Naive thymus-derived CD4-positive, alpha-beta T cell (primary cell): ENCODE measurements at regions of chr9 and their contacts with region 1.

Region 1: GRCh38 chr9:5832543-5833529 is at the start of gene ERMP1:
- DNase-seq: peak; percentile 83 to 94 (median 91)
- ATAC-seq: peak; percentile 95
- H3K4me3 ChIP-seq: peak within 1 kb of the TSS; percentile 85
- H3K4me3 Mint-ChIP-seq: peak within 1 kb of the TSS; percentile 91 to 99 (median 95)
- H3K27ac ChIP-seq: peak within 1 kb of the TSS; percentile 60
- H3K27ac Mint-ChIP-seq: peak within 1 kb of the TSS; percentile 79 to 96 (median 89)
- H3K4me1 ChIP-seq: peaks cover 25 to 33% of the 10 kb centered on the region in 2 donors
- H3K4me1 Mint-ChIP-seq: peaks cover 28 to 71% (median 60%) of the 10 kb centered on the region in 7 donors
- H3K27me3 ChIP-seq: no peaks in the 10 kb centered on the region
- H3K27me3 Mint-ChIP-seq: no peaks in the 10 kb centered on the region
- total RNA-seq, gene ERMP1: 9.5 to 37.1 (median 20.0) TPM

Region 2: GRCh38 chr9:4740638-4741364 is 1092.0 kb before region 1 on chr9 and contains the start of gene AK3:
- CTCF ChIA-PET with region 1: no interaction called
- POLR2A ChIA-PET with region 1: no interaction called
- intact Hi-C with region 1: loop called in 1 of 2 experiments (anchors 10 kb)
- DNase-seq: peak; percentile 72 to 85 (median 83)
- ATAC-seq: peak; percentile 95
- H3K4me3 ChIP-seq: peak within 1 kb of the TSS; percentile 73
- H3K4me3 Mint-ChIP-seq: peak within 1 kb of the TSS; percentile 88 to 99 (median 94)
- H3K27ac ChIP-seq: peak within 1 kb of the TSS; percentile 86
- H3K27ac Mint-ChIP-seq: peak within 1 kb of the TSS; percentile 86 to 98 (median 93)
- H3K4me1 ChIP-seq: peaks cover 10 to 16% of the 10 kb centered on the region in 2 donors
- H3K4me1 Mint-ChIP-seq: peaks cover 22 to 49% (median 40%) of the 10 kb centered on the region in 7 donors
- H3K27me3 ChIP-seq: no peaks in the 10 kb centered on the region
- H3K27me3 Mint-ChIP-seq: no peaks in the 10 kb centered on the region
- total RNA-seq, gene AK3: 18.0 to 34.8 (median 25.8) TPM

Region 3: DNA sequence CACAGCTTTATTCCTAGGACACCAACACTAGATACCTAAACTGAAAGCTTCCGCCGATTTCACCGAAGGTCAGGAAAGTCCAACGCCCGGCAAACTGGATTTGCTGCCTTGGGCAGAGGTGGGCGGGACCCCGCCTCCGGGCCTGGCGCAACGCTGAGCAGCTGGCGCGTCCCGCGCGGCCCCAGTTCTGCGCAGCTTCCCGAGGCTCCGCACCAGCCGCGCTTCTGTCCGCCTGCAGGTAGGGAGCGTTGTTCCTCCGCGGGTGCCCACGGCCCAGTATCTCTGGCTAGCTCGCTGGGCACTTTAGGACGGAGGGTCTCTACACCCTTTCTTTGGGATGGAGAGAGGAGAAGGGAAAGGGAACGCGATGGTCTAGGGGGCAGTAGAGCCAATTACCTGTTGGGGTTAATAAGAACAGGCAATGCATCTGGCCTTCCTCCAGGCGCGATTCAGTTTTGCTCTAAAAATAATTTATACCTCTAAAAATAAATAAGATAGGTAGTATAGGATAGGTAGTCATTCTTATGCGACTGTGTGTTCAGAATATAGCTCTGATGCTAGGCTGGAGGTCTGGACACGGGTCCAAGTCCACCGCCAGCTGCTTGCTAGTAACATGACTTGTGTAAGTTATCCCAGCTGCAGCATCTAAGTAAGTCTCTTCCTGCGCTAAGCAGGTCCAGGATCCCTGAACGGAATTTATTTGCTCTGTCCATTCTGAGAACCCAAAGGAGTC is 382.3 kb before region 1 on chr9 and contains the start of gene CD274:
- CTCF ChIA-PET with region 1: no interaction called
- POLR2A ChIA-PET with region 1: no interaction called
- intact Hi-C with region 1: loop called in 1 of 2 experiments (anchors 5 kb)
- DNase-seq: peak; percentile 61 to 89 (median 80)
- ATAC-seq: peak; percentile 95
- H3K4me3 ChIP-seq: peak within 1 kb of the TSS; percentile 78
- H3K4me3 Mint-ChIP-seq: peak within 1 kb of the TSS; percentile 92 to 98 (median 95)
- H3K27ac ChIP-seq: peak within 1 kb of the TSS; percentile 94
- H3K27ac Mint-ChIP-seq: peak within 1 kb of the TSS; percentile 97 to 99 (median 98)
- H3K4me1 ChIP-seq: peaks cover 0 to 11% of the 10 kb centered on the region in 2 donors
- H3K4me1 Mint-ChIP-seq: peaks cover 33 to 69% (median 62%) of the 10 kb centered on the region in 7 donors
- H3K27me3 ChIP-seq: no peaks in the 10 kb centered on the region
- H3K27me3 Mint-ChIP-seq: no peaks in the 10 kb centered on the region
- total RNA-seq, gene CD274: 2.9 to 38.7 (median 7.8) TPM

Region 4: GRCh38 chr9:5843794-5844504 is 11.1 kb after region 1 on chr9:
- CTCF ChIA-PET with region 1: interaction called, 45 read pairs
- POLR2A ChIA-PET with region 1: interaction called, 38 read pairs
- intact Hi-C with region 1: loop called (anchors 1 kb)
- DNase-seq: peak in 2 of 9 donors; percentile 7 to 22
- ATAC-seq: peak; percentile 20
- H3K4me3 ChIP-seq: peak overlapping the region; percentile 5
- H3K4me3 Mint-ChIP-seq: peak overlapping the region; percentile 75 to 85 (median 80)
- H3K27ac ChIP-seq: peak overlapping the region; percentile 24
- H3K27ac Mint-ChIP-seq: peak overlapping the region; percentile 58 to 93 (median 91)
- H3K4me1 ChIP-seq: peaks cover 45 to 47% of the 10 kb centered on the region in 2 donors
- H3K4me1 Mint-ChIP-seq: peaks cover 50 to 83% (median 64%) of the 10 kb centered on the region in 7 donors
- H3K27me3 ChIP-seq: no peaks in the 10 kb centered on the region
- H3K27me3 Mint-ChIP-seq: no peaks in the 10 kb centered on the region

Region 5: DNA sequence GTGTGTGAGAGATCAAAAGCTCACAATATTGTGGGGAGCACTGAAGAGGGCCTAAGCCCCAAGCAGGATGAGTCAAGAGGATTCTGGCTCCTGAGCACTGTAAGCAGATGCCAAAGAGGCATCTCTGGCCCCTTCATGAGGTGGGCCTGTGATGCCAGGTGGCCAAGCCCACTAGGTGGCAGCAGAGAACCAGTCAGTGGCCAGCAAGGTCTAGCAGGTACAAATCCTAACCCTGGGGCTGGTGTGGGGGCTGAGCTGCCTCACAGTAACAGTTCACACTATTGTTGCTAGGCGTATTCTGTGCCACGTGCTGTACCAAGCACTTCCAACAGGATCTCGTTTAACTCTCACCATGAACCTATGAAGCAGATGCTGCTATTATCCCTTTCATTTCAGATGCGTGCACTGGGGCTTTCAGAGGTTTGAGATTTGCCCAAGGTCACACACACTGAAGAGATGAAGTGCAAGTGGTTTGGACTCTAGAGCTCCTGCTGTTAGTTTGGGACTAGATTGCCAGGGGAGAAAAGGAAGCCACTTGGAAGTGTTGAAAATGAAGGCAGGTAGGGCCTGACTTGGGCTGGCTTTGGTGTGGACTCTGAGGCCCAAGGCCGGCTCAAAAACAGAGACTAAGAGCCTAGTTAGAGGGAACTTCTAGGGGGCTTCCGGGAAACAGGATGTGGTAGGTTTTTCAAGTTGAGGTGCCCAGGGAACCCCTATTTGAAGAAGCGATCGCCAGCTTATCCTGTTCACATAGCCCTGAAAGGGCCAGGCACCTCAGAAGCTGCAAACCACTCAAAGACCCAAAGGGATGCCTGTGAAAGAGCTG is 53.5 kb after region 1 on chr9:
- CTCF ChIA-PET with region 1: interaction called, 5 read pairs
- POLR2A ChIA-PET with region 1: interaction called, 4 read pairs
- intact Hi-C with region 1: loop called (anchors 1 to 2 kb)
- DNase-seq: peak; percentile 45 to 80 (median 64)
- ATAC-seq: peak; percentile 94
- H3K4me3 ChIP-seq: no peak overlapping the region
- H3K4me3 Mint-ChIP-seq: no peak overlapping the region
- H3K27ac ChIP-seq: no peak overlapping the region
- H3K27ac Mint-ChIP-seq: peak overlapping the region in 4 of 9 donors; percentile 11 to 64 (median 34)
- H3K4me1 ChIP-seq: peaks cover 0 to 3% of the 10 kb centered on the region in 2 donors
- H3K4me1 Mint-ChIP-seq: peaks cover 0 to 14% (median 7%) of the 10 kb centered on the region in 7 donors
- H3K27me3 ChIP-seq: no peaks in the 10 kb centered on the region
- H3K27me3 Mint-ChIP-seq: no peaks in the 10 kb centered on the region

Region 6: DNA sequence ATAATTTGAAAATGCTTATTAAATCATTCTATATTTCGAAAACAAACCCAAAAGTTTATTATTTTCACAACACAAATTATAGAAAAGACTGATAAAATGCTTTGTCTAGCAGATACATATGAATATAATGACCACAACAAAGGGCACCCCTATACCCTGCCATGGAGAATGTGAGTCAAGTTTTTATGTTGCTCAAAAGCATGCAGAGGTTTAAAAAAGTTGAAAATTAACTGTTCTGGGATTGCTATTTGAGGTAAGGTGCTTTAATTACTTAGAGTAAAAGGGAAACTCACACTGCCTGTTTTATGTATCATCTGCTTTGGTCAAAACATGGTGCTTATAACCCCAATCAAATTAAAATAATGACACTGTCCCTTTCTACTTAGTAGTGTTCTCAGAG is 98.8 kb after region 1 on chr9:
- CTCF ChIA-PET with region 1: no interaction called
- POLR2A ChIA-PET with region 1: no interaction called
- intact Hi-C with region 1: no loop called
- DNase-seq: no peak
- ATAC-seq: no peak
- H3K4me3 ChIP-seq: no peak overlapping the region
- H3K4me3 Mint-ChIP-seq: no peak overlapping the region
- H3K27ac ChIP-seq: no peak overlapping the region
- H3K27ac Mint-ChIP-seq: no peak overlapping the region
- H3K4me1 ChIP-seq: no peaks in the 10 kb centered on the region
- H3K4me1 Mint-ChIP-seq: peaks cover 0 to 5% (median 0%) of the 10 kb centered on the region in 7 donors
- H3K27me3 ChIP-seq: no peaks in the 10 kb centered on the region
- H3K27me3 Mint-ChIP-seq: no peaks in the 10 kb centered on the region

Region 7: GRCh38 chr9:5982317-5982716 is 149.5 kb after region 1 on chr9:
- CTCF ChIA-PET with region 1: no interaction called
- POLR2A ChIA-PET with region 1: no interaction called
- intact Hi-C with region 1: no loop called
- DNase-seq: no peak
- ATAC-seq: no peak
- H3K4me3 ChIP-seq: no peak overlapping the region
- H3K4me3 Mint-ChIP-seq: no peak overlapping the region
- H3K27ac ChIP-seq: no peak overlapping the region
- H3K27ac Mint-ChIP-seq: no peak overlapping the region
- H3K4me1 ChIP-seq: no peaks in the 10 kb centered on the region
- H3K4me1 Mint-ChIP-seq: peaks cover 0 to 39% (median 25%) of the 10 kb centered on the region in 7 donors
- H3K27me3 ChIP-seq: no peaks in the 10 kb centered on the region
- H3K27me3 Mint-ChIP-seq: no peaks in the 10 kb centered on the region

Region 8: DNA sequence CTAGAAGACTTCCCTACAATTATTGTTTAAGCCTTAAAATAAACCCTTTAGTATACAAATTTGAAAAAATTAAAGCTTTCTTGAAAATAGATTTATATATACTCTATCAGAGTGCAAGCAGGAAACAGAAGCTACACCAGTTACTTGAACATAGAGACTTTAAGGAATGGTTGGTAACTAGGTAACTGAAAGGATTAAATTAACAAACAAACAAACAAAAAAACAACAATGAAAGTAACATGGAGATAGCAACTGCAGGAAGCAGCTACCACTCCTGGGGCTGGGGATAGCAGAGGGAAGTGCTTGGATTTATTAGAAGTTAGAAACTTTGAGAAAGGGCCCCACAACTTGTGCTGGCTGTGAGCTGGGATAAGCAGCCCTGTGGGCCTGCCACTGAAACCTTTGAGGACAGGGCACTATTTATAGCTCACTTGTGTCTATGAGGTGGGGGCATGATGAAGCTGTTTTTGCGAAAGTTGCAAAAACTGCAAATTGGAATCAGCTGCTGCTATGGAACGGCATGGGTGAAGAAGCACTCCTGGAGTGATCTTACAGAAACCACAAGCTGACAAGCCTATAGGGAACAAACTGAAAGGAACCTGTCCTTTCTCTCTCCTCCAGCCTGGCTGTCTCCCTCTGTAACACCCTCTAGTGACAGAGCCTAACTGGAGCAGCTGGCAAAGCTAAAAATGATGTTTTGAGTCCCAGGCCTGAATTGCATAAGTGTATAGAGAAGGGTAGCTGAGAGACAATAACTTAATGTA is 273.9 kb after region 1 on chr9:
- CTCF ChIA-PET with region 1: no interaction called
- POLR2A ChIA-PET with region 1: no interaction called
- intact Hi-C with region 1: no loop called
- DNase-seq: no peak
- ATAC-seq: peak; percentile 53
- H3K4me3 ChIP-seq: no peak overlapping the region
- H3K4me3 Mint-ChIP-seq: no peak overlapping the region
- H3K27ac ChIP-seq: no peak overlapping the region
- H3K27ac Mint-ChIP-seq: peak overlapping the region in 7 of 9 donors; percentile 5 to 39 (median 17)
- H3K4me1 ChIP-seq: peaks cover 0 to 5% of the 10 kb centered on the region in 2 donors
- H3K4me1 Mint-ChIP-seq: peaks cover 0 to 46% (median 30%) of the 10 kb centered on the region in 7 donors
- H3K27me3 ChIP-seq: no peaks in the 10 kb centered on the region
- H3K27me3 Mint-ChIP-seq: peaks cover 0 to 2% (median 0%) of the 10 kb centered on the region in 5 donors